GM10248 (cell line): ENCODE measurements at regions of chr14 and their contacts with region 1.

Region 1: DNA sequence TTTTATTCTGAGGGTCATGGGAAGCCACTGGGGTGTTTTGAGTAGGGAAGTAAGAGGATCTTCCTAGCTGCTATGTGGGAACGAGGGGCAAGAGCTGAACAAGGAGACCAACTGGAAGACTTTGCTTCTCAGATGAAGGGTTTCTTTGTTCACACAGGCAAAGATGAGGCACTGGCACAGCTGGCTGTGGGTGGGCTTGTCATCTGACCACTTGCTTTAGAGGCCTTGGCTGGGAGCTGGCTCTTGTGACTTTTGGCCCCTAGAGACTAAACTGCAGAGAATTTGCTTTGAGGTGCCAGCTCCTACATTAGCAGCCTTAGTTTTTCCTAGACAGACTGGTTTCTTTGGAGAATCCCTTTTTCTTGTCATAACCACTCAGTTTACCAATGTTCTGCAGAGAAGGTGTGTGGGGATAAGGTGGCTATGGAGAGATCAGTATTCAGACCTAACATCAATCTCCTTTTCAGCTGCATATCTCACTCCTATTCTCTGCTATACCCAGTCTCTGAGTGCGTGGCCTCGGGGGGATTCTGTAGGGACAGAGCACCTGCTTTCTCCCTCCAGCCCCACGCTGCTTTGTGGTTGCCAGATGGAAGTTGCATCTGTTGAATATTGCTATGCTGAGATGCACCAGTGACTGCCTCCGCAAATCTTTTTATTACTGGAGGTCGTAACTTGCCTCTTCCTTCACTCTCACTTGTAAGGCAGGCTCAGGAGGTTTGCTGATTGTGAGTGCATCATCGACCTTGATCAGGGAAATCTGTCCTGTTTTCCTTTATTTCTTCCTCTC is 12.7 kb downstream of the PPP2R5C start:
- DNase-seq: no peak
- CTCF ChIP-seq: no peak

Region 2: DNA sequence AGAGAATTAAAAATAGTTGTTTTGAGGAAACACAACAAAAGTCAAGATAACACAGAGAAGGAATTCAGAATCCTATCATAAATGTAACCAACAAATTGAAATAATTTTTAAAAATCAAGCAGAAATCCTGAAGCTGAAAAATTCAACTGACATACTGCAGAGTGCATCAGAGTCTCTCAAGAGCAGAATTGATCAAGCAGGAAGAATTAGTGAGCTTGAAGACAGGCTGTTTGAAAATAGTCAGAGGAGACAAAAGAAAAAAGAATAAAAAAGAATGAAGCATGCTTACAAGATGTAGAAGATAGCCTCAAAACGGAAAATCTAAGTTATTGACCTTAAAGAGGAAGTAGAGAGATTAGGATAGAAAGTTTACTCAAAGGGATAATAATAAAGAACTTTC is 78.5 kb before region 1 on chr14:
- CTCF ChIA-PET with region 1: no interaction called
- POLR2A ChIA-PET with region 1: no interaction called
- DNase-seq: no peak
- CTCF ChIP-seq: no peak

Region 3: GRCh38 chr14:101761032-101761880 is 12.9 kb before region 1 on chr14 and contains the start of gene PPP2R5C:
- CTCF ChIA-PET with region 1: interaction called, 15 read pairs
- POLR2A ChIA-PET with region 1: no interaction called
- DNase-seq: peak; percentile 94
- CTCF ChIP-seq: no peak

Region 4: GRCh38 chr14:101823511-101824120 is 49.4 kb after region 1 on chr14:
- CTCF ChIA-PET with region 1: interaction called, 13 read pairs
- POLR2A ChIA-PET with region 1: no interaction called
- DNase-seq: peak; percentile 41
- CTCF ChIP-seq: no peak

Region 5: DNA sequence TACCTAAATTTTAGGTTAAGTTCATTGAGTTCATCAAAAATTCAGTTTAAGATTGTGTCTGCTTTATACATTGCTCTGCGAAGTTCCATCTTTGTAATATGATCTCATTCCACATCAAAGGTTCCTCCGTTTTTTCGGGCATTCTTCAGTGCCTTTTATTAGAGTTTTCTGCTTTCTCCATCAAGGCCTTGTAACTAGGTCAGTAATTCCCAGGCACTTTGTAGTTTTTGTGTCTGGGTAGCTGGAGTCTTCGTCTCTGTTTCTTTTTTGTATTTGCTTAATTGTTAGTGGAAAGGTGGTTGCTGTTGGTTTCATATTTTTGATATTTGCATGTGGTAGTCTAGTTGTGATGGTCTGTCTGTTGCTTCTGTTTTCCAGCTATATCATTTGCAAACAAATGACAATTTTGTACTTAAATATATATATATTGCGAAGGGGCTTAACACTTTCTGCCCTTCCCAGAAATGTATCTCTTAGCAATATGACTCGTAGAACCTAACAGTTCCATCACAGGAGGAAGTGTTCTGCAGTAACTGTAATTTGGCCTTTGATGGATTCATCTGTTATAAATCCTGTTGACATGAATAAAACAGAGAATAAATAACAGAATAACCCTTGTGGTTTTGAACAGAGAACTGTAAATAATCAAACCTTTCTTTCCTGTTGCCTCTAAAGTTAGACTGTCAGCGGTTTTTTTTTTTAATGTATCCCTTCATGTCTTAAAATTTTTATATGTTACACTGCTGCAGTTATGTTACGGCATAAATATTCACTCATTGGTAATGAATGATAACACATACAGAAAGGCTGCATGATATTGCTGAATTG is 101.7 kb after region 1 on chr14:
- CTCF ChIA-PET with region 1: interaction called, 18 read pairs
- POLR2A ChIA-PET with region 1: no interaction called
- DNase-seq: no peak
- CTCF ChIP-seq: no peak

Region 6: DNA sequence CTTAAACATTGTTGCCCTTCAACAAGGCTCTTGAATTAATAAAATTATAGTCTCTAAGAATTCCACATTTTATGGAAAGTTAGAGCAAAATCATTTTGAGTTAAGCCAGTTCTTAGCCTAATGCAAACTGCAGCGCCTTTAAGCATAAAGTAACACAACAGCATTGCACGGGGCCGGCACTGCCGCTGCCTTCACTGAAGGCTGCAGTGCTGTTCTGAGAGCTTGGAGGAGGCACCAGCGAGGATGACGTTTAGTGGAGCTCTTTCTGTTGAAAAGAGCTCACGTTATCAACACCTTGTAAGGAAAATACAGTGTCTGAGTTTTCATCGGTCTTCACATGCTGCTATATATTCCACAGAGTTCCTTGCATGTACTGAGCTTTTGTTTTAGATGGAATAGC is 151.9 kb after region 1 on chr14:
- CTCF ChIA-PET with region 1: interaction called, 10 read pairs
- POLR2A ChIA-PET with region 1: no interaction called
- DNase-seq: no peak
- CTCF ChIP-seq: no peak

Region 7: DNA sequence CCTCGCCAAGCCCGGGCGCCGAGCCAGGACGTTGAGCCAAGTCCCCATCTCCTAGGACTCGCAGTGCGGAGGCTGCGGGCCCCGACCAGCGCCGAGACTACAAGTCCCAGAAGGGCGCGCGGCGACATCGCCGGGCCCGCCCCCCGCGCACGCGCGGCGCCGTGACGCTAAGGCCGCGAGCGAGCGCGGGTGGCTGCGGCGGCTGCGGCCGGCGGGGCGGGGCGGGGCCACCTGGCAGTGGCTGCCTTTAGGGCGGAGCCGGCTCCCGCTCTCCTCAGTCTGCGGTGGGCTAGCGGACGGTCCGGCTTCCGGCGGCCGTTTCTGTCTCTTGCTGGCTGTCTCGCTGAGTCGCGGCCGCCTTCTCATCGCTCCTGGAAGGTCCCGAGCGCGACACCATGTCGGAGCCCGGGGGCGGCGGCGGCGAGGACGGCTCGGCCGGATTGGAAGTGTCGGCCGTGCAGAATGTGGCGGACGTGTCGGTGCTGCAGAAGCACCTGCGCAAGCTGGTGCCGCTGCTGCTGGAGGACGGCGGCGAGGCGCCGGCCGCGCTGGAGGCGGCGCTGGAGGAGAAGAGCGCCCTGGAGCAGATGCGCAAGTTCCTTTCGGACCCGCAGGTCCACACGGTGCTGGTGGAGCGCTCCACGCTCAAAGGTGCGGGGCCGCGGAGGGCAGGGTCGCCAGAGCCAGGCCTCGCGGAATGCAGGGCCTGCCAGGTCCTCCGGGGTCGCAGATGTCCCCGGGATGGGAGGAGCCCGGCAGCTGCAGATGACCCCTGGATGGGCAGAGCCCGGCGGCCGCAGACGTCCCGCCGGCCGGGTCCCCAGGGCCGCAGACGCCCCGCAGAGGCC is 190.3 kb after region 1 on chr14 and contains the start of gene DYNC1H1:
- CTCF ChIA-PET with region 1: interaction called, 16 read pairs
- POLR2A ChIA-PET with region 1: no interaction called
- DNase-seq: peak; percentile 93
- CTCF ChIP-seq: no peak